Common myeloid progenitor, CD34-positive (primary cell): ENCODE measurements at regions of chr3 and their contacts with region 1.

Region 1: GRCh38 chr3:17233398-17233800 is 348.6 kb downstream of the PLCL2 start:
- DNase-seq: peak; percentile 56 to 86 (median 84)
- H3K4me3 ChIP-seq: no peak overlapping the region
- H3K27ac ChIP-seq: no peak overlapping the region
- H3K4me1 ChIP-seq: peaks cover 0 to 6% (median 1%) of the 10 kb centered on the region in 4 experiments
- H3K27me3 ChIP-seq: no peaks in the 10 kb centered on the region

Region 2: GRCh38 chr3:16600780-16601539 is 632.4 kb before region 1 on chr3:
- CTCF ChIA-PET with region 1: interaction called, 42 read pairs
- POLR2A ChIA-PET with region 1: no interaction called
- DNase-seq: peak; percentile 87 to 94 (median 90)
- H3K4me3 ChIP-seq: no peak overlapping the region
- H3K27ac ChIP-seq: no peak overlapping the region
- H3K4me1 ChIP-seq: peaks cover 0 to 3% (median 0%) of the 10 kb centered on the region in 4 experiments
- H3K27me3 ChIP-seq: no peaks in the 10 kb centered on the region